Dorsolateral prefrontal cortex (tissue), 120 donors: ENCODE measurements at regions of chr5 and their contacts with region 1.

Region 1: DNA sequence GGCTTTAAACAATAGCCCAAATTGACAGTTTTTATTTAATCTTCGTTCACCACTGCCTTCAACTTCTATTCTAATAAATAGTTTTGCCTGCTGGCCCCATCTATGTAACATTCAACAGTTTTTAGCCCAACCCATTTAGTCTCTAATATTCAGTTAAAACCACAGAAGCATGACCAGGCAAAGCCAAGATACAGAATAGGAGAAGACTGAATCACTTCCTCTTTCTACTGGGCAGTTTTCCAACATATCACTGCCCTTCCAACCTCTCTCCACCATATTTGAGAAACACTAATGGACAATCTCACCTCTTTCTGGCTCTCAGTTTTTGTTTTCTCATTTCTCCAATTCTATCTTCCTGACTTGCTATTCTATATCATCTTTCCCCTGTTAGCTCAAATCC is 352.9 kb downstream of the DNAH5 start:
- DNase-seq: no peak
- H3K4me3 ChIP-seq: no peak overlapping the region
- H3K27ac ChIP-seq: peak overlapping the region in 19 of 59 donors; percentile 12 to 86 (median 51)
- H3K27me3 ChIP-seq: no peaks in the 10 kb centered on the region
- CTCF ChIP-seq: no peak

Region 2: DNA sequence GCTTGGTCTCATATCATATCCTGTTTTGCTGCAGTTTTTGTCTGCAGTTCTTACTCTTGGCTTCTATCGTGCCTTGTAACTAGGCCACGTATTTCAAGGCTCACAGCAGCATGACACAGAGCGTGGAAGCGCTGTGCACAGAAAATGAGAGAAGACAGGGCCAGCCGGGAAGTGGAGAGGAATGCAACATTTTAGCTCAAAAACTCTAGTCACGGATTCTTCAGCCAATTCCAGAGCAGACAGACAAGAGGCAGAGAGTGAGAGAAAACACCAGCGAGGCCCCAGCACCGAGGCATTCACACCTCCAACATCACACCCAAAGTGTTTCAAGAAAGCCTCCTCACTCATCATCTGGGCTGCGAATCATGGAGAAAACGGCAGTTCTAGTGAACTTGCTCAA is 192.1 kb after region 1 on chr5:
- intact Hi-C with region 1: loop called in 1 of 2 experiments (anchors 5 kb)
- DNase-seq: peak in 9 of 10 donors; percentile 7 to 76 (median 56)
- H3K4me3 ChIP-seq: no peak overlapping the region
- H3K27ac ChIP-seq: peak overlapping the region in 24 of 59 donors; percentile 8 to 84 (median 58)
- H3K27me3 ChIP-seq: no peaks in the 10 kb centered on the region
- CTCF ChIP-seq: no peak

Region 3: GRCh38 chr5:13866792-13867191 is 275.2 kb after region 1 on chr5:
- intact Hi-C with region 1: no loop called
- DNase-seq: peak in 2 of 10 donors; percentile 12 to 30
- H3K4me3 ChIP-seq: no peak overlapping the region
- H3K27ac ChIP-seq: no peak overlapping the region
- H3K27me3 ChIP-seq: no peaks in the 10 kb centered on the region
- CTCF ChIP-seq: no peak

Region 4: GRCh38 chr5:14035859-14036440 is 444.3 kb after region 1 on chr5:
- intact Hi-C with region 1: no loop called
- DNase-seq: peak in 1 of 10 donors; percentile 17
- H3K4me3 ChIP-seq: peak overlapping the region in 14 of 59 donors; percentile 1 to 34 (median 14)
- H3K27ac ChIP-seq: peak overlapping the region in 27 of 59 donors; percentile 3 to 70 (median 48)
- H3K27me3 ChIP-seq: peaks cover 0 to 11% (median 0%) of the 10 kb centered on the region in 45 donors
- CTCF ChIP-seq: no peak